AG04449 (cell line): ENCODE measurements at regions of chr10 and their contacts with region 1.

Region 1: DNA sequence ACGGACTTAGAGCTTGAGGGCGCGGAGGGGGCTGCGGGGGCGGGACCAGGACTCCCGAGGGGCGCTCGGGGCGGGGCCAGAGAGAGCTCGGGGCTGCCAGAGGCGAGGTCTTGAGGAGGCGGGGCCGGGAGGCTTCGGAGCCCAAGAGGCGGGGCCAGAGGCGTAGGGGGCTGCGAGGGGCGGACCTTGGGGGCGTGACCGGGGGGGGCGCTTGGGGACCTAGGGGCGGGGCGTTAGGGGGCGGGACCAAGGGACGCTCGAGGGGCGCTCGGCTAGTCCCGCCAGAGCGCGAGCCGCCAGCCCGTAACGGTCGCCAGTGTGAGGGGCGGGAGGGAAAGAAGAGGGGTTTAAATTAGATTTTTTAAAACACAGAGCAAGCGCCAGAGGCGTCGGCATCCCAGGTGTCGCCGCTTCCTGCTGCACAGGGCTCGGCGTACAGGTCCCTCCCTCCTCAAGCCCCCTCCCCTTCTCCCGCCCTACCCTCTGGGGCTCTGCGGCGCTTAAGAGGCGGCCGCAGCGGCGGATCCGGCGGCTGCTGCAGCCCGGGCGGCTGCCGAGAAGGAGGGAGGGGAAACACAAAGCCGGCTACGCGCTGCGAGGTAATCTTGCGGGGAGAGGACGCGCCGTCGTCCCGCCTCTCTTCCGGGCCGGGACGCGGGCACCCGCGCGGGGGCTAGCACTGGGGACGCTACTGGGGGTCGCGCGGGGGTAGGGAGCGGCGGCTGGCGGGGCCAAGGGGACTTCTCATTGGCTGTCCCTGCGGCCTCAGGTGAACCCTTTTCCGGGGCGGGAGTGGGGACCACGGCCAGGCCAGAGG is at the start of gene ADD3:
- DNase-seq: peak; percentile 55
- H3K4me3 ChIP-seq: peak within 1 kb of the TSS; percentile 82
- CTCF ChIP-seq: no peak

Region 2: GRCh38 chr10:109987452-109988211 is 20.3 kb before region 1 on chr10:
- CTCF ChIA-PET with region 1: interaction called, 4 read pairs
- POLR2A ChIA-PET with region 1: interaction called, 12 read pairs
- DNase-seq: peak; percentile 65
- H3K4me3 ChIP-seq: no peak overlapping the region
- CTCF ChIP-seq: no peak